Endothelial cell of umbilical vein (primary cell): ENCODE measurements at regions of chr3 and their contacts with region 1.

Region 1: DNA sequence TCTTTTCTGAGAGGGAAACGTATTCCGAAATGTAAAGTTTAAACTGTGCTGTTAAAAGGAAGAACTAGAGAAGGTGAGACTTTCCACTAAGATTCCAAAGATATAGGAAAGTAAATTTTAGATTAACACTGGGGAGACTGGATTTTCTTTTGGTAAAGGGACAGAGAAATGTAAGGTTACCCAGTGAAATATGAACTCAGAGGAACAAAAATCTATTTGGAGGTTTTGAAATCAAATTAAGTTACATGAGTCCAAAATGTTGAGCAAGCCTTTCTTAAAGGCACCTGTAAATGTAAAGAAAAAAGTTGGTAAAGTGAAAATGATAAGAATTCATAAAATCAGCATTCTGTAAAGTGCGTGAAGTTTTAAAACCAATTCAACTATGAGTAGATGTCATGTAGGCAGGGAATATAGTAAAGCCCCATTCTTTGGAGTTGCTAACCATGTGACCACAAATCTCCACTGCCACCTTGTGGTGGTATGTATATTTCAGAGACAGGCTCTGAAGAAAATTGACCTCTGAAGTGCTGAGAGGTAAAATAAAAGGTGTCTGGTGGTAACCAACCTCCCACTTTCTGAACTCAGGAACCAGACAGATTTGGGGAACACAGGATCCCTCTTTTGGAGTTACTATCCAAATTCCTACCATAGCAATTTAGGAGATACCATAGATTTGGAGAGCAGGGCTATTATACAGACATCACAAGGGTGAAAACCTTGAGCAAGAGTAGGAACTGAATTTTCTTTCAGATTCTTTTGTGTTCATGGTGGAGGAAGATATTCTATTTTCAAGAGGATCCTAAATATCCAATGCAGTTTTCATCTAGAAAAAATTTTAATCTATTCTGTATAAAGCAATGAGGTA is 215.3 kb downstream of the ROBO2 start:
- DNase-seq: peak; percentile 26
- H3K4me3 ChIP-seq: no peak overlapping the region
- H3K27ac ChIP-seq: no peak overlapping the region
- H3K4me1 ChIP-seq: no peaks in the 10 kb centered on the region
- H3K27me3 ChIP-seq: no peaks in the 10 kb centered on the region
- CTCF ChIP-seq: peak; percentile 44 to 47
- POLR2A ChIP-seq: no peak

Region 2: GRCh38 chr3:77038468-77038929 is 216.7 kb before region 1 on chr3:
- CTCF ChIA-PET with region 1: interaction called, 12 read pairs
- POLR2A ChIA-PET with region 1: no interaction called
- dilution Hi-C with region 1: no loop called
- intact Hi-C with region 1: loop called (anchors 1 kb)
- DNase-seq: peak; percentile 67
- H3K4me3 ChIP-seq: peak overlapping the region in 1 of 3 experiments; percentile 21
- H3K27ac ChIP-seq: no peak overlapping the region
- H3K4me1 ChIP-seq: peaks cover 11% of the 10 kb centered on the region
- H3K27me3 ChIP-seq: peaks cover 17 to 26% of the 10 kb centered on the region in 2 experiments
- CTCF ChIP-seq: peak; percentile 32 to 51
- POLR2A ChIP-seq: no peak

Region 3: DNA sequence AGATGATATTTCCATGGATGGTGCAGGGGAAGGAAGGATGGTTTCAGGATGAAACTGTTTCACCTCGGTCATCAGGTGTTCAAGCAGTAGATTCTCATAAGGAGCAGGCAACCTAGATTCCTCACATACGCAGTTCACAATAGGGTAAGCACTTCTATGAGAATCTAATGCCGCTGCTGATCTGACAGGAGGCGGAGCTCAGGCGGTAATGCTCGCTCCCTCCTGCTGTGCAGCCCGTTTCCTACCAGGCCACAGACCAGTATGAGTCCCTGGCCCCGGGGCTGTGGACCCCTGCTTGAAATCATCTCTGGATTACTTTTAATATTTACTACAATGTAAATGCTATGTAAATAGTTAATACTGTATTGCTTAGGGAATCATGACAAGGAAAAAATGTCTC is 26.5 kb after region 1 on chr3:
- CTCF ChIA-PET with region 1: no interaction called
- POLR2A ChIA-PET with region 1: no interaction called
- dilution Hi-C with region 1: no loop called
- intact Hi-C with region 1: loop called (anchors 1 kb)
- DNase-seq: no peak
- H3K4me3 ChIP-seq: no peak overlapping the region
- H3K27ac ChIP-seq: no peak overlapping the region
- H3K4me1 ChIP-seq: no peaks in the 10 kb centered on the region
- H3K27me3 ChIP-seq: no peaks in the 10 kb centered on the region
- CTCF ChIP-seq: no peak
- POLR2A ChIP-seq: no peak